Heart right ventricle (tissue), 16 donors: ENCODE measurements at regions of chr7 and their contacts with region 1.

Region 1: DNA sequence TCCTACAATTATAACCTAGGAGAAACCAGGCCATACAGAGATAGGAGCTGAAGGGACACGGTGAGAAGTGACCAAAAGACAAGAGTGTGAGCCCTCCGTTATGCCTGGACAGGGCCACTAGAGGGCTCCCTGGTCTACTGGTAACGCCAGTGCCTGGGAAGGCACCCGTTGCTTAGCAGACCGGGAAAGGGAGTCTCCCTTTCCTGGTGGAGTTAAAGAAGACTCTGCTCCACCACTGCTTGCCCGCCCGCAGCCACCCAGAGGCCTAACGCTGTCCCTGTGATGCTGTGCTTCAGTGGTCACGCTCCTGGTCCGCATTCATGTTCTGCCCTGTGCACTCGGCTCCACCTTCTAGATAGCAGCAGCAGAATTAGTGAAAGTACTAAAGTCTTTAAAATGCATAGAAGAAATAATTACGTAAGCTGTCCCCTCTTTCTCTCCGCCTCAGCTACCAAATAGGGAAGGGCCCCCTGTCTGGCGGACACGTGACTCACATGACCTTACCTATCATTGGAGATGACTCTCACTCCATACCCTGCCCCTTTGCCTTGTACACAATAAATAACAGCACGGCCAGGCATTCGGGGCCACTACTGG is 34.8 kb downstream of the GRID2IP start:
- DNase-seq: peak; percentile 77 to 87
- ATAC-seq: peak; percentile 75 to 90 (median 83)
- H3K4me3 ChIP-seq: peak overlapping the region in 6 of 10 donors; percentile 25 to 39 (median 34)
- H3K27ac ChIP-seq: no peak overlapping the region
- H3K4me1 ChIP-seq: peaks cover 0 to 8% (median 4%) of the 10 kb centered on the region in 9 donors
- H3K27me3 ChIP-seq: peaks cover 0 to 7% (median 5%) of the 10 kb centered on the region in 7 donors
- CTCF ChIP-seq: peak; percentile 50 to 96 (median 86)

Region 2: GRCh38 chr7:5854738-5855137 is 661.7 kb before region 1 on chr7:
- intact Hi-C with region 1: loop called in 1 of 10 experiments (anchors 5 kb)
- DNase-seq: no peak
- ATAC-seq: no peak
- H3K4me3 ChIP-seq: no peak overlapping the region
- H3K27ac ChIP-seq: no peak overlapping the region
- H3K4me1 ChIP-seq: peaks cover 0 to 5% (median 0%) of the 10 kb centered on the region in 9 donors
- H3K27me3 ChIP-seq: peaks cover 0 to 5% (median 0%) of the 10 kb centered on the region in 7 donors
- CTCF ChIP-seq: no peak

Region 3: DNA sequence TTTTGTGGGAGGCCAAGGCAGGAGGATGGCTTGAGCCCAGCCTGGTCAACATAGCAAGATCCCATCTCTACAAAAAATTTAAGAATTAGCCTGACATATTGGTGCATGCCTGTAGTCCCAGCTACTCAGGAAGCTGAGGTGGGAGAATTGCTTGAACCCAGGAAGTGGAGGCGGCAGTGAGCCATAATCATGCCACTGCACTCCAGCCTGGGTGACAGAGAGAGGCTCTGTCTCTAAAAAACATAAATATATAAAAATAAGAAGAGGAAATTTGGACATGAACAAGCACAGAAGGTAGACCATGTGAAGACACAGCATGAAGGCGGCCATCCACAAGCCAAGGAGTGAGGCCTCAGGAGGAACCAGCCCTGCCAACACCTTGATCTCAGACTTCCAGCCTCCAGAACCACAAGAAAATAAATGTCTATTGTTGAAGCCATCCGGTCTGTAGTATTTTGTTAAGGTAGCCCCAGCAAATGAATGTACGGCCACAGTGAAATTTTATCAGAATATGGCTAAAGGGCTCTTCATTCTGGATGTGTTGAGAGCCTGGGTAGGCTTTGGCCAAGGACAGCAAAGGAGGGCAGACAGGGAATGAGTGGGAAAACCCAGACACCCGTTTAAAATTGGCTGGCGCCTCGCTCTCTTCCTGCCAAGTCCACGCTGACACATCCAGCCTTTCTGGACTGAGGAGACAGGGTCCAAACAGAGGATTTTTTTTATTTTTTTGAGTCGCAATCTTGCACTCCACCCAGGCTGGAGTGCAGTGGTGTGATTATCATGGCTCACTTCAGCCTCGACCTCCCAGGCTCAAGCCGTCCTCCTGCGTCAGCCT is 47.7 kb after region 1 on chr7:
- intact Hi-C with region 1: loop called in 1 of 10 experiments (anchors 10 kb)
- DNase-seq: no peak
- ATAC-seq: peak in 3 of 8 donors; percentile 37 to 49 (median 41)
- H3K4me3 ChIP-seq: no peak overlapping the region
- H3K27ac ChIP-seq: no peak overlapping the region
- H3K4me1 ChIP-seq: no peaks in the 10 kb centered on the region
- H3K27me3 ChIP-seq: peaks cover 0 to 15% (median 0%) of the 10 kb centered on the region in 7 donors
- CTCF ChIP-seq: no peak

Region 4: GRCh38 chr7:6577365-6578113 is 61.1 kb after region 1 on chr7 and contains the start of gene ZDHHC4:
- intact Hi-C with region 1: loop called in 1 of 10 experiments (anchors 10 kb)
- DNase-seq: peak; percentile 89 to 93
- ATAC-seq: peak; percentile 97 to 99 (median 98)
- H3K4me3 ChIP-seq: peak within 1 kb of the TSS; percentile 41 to 91 (median 76)
- H3K27ac ChIP-seq: peak within 1 kb of the TSS; percentile 76 to 97 (median 96)
- H3K4me1 ChIP-seq: peaks cover 0 to 15% (median 7%) of the 10 kb centered on the region in 9 donors
- H3K27me3 ChIP-seq: no peaks in the 10 kb centered on the region
- CTCF ChIP-seq: no peak
- total RNA-seq, gene ZDHHC4: 29.7 to 53.5 (median 43.3) TPM

Region 5: DNA sequence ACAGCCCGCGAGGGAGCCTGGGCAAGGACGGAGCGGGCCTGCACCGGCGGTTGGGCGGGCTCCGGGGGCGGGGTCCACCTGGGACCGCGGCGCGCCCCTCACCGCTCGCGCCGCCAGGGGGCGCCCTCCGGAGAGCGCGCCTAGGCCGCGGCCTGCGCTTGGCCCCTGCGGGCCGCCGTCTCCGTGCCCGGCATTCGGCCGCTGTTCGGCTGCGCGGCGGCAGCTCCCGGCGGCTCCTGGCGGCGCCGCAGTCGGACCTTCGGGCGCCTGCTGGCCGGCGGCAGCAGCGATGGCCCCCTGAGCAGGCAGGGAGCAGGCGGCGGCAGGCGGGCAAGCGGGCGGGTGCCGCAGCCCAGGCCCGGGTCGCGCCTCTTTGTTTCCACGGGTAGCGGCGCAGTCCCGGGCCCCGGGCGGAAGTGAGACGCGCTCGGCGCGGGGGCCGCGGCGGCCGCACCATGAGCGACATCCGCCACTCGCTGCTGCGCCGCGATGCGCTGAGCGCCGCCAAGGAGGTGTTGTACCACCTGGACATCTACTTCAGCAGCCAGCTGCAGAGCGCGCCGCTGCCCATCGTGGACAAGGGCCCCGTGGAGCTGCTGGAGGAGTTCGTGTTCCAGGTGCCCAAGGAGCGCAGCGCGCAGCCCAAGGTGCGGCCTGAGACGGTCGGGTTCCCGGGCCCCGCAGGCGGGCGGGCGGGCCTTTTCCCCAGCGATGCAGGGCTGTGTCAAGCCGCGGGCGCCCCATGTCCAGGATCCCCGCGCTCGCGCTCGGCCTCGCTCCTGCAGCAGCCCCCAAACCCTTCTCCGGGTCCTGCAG is 73.6 kb after region 1 on chr7 and contains the start of gene INTS15:
- intact Hi-C with region 1: loop called in 1 of 10 experiments (anchors 2 kb)
- DNase-seq: peak; percentile 62 to 78
- ATAC-seq: peak; percentile 92 to 98 (median 94)
- H3K4me3 ChIP-seq: peak within 1 kb of the TSS; percentile 68 to 100 (median 92)
- H3K27ac ChIP-seq: peak within 1 kb of the TSS; percentile 80 to 96 (median 92)
- H3K4me1 ChIP-seq: peaks cover 7 to 21% (median 16%) of the 10 kb centered on the region in 9 donors
- H3K27me3 ChIP-seq: no peaks in the 10 kb centered on the region
- CTCF ChIP-seq: peak; percentile 54 to 97 (median 80)
- total RNA-seq, gene INTS15: 9.8 to 22.0 (median 13.5) TPM

Region 6: DNA sequence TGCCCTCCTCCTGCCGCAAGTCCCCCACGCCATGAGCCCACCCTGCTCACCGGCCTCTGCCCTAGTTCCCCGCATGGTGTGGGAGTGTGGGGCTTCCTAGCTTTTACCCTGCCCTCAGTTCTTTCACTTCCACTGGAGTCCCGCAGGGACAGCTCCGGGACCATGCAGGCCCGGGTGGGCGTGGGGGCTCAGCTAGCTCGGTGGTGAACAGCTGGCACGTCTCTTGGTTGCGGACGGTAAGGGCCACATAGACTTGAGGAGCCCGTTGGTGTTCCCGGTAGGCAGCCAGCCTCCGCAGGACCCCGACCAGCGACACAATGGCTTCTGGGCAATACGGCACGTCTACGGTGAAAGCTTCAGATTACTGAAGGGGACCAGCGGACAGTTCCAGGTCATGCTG is 418.5 kb after region 1 on chr7:
- intact Hi-C with region 1: loop called in 1 of 10 experiments (anchors 10 kb)
- DNase-seq: no peak
- ATAC-seq: no peak
- H3K4me3 ChIP-seq: no peak overlapping the region
- H3K27ac ChIP-seq: no peak overlapping the region
- H3K4me1 ChIP-seq: no peaks in the 10 kb centered on the region
- H3K27me3 ChIP-seq: no peaks in the 10 kb centered on the region
- CTCF ChIP-seq: no peak